ENCODE measurements at regions of chr2 and their contacts with region 1.

Region 1: GRCh38 chr2:35410431-35411061 is 945.0 kb upstream of the CRIM1 start:
- DNase-seq: peak; percentile 67 to 85
- ATAC-seq: no peak
- H3K4me3 ChIP-seq: no peak overlapping the region
- H3K27ac ChIP-seq: no peak overlapping the region
- H3K4me1 ChIP-seq: no peaks in the 10 kb centered on the region
- H3K27me3 ChIP-seq: no peaks in the 10 kb centered on the region

Region 2: GRCh38 chr2:33673937-33674336 is 1736.6 kb before region 1 on chr2:
- intact Hi-C with region 1: loop called in 1 of 2 experiments (anchors 10 kb)
- DNase-seq: no peak
- ATAC-seq: no peak
- H3K4me3 ChIP-seq: no peak overlapping the region
- H3K27ac ChIP-seq: no peak overlapping the region
- H3K4me1 ChIP-seq: no peaks in the 10 kb centered on the region
- H3K27me3 ChIP-seq: no peaks in the 10 kb centered on the region

Region 3: GRCh38 chr2:35168354-35168753 is 242.2 kb before region 1 on chr2:
- intact Hi-C with region 1: loop called in 1 of 2 experiments (anchors 5 kb)
- DNase-seq: no peak
- ATAC-seq: no peak
- H3K4me3 ChIP-seq: no peak overlapping the region
- H3K27ac ChIP-seq: no peak overlapping the region
- H3K4me1 ChIP-seq: no peaks in the 10 kb centered on the region
- H3K27me3 ChIP-seq: no peaks in the 10 kb centered on the region

Region 4: GRCh38 chr2:35783725-35784124 is 373.2 kb after region 1 on chr2:
- intact Hi-C with region 1: no loop called
- DNase-seq: no peak
- ATAC-seq: no peak
- H3K4me3 ChIP-seq: no peak overlapping the region
- H3K27ac ChIP-seq: no peak overlapping the region
- H3K4me1 ChIP-seq: no peaks in the 10 kb centered on the region
- H3K27me3 ChIP-seq: no peaks in the 10 kb centered on the region